ENCODE measurements at regions of chr4 and their contacts with region 1.

Region 1: GRCh38 chr4:109433205-109434006 is at the start of gene SEC24B:
- DNase-seq: peak; percentile 89
- H3K4me3 ChIP-seq: peak within 1 kb of the TSS; percentile 80
- H3K27ac ChIP-seq: peak within 1 kb of the TSS; percentile 92
- H3K4me1 ChIP-seq: no peaks in the 10 kb centered on the region
- H3K27me3 ChIP-seq: no peaks in the 10 kb centered on the region
- CTCF ChIP-seq: peak; percentile 88
- total RNA-seq, gene SEC24B: 26.5 to 39.5 TPM

Region 2: DNA sequence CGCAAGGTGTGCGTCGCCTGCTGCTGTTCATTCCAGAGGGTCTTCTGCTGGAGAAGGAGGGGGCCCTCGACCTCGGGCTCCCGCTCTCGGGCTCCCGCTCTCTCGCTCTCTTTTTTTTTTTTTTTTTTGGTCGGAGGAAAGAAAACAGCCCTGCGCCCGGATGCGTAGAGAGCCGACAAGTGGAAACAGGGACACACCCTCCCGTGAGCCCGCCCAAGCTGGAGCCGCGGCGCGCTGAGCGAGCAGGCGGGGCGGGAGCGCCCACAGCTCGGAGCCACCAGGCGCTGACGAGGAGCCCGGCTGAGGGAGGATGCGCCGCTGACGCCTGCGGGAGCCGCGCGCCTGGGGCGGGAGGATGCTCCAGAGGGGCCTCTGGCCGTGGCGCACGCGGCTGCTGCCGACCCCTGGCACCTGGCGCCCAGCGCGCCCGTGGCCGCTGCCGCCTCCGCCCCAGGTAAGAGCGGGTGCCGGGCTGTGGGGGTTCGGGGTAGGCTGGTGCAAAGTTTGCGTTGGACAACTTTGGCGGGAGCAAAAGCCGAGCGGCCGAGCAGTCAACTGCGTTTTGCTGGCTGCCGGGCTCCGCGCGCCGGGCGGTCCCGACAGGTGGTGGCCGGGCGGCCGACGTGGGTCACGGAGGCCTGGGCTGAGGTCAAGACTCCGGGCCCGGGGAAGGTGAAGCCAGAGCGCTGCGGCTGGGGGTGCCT is 126.7 kb after region 1 on chr4 and contains the start of gene MCUB:
- intact Hi-C with region 1: loop called (anchors 10 kb)
- DNase-seq: peak; percentile 90
- H3K4me3 ChIP-seq: peak within 1 kb of the TSS; percentile 84
- H3K27ac ChIP-seq: peak within 1 kb of the TSS; percentile 91
- H3K4me1 ChIP-seq: no peaks in the 10 kb centered on the region
- H3K27me3 ChIP-seq: no peaks in the 10 kb centered on the region
- CTCF ChIP-seq: no peak
- total RNA-seq, gene MCUB: 10.4 to 11.7 TPM

Region 3: GRCh38 chr4:109702950-109703663 is 269.7 kb after region 1 on chr4 and contains the start of gene CASP6:
- intact Hi-C with region 1: loop called (anchors 5 kb)
- DNase-seq: peak; percentile 95
- H3K4me3 ChIP-seq: peak within 1 kb of the TSS; percentile 81
- H3K27ac ChIP-seq: peak within 1 kb of the TSS; percentile 96
- H3K4me1 ChIP-seq: no peaks in the 10 kb centered on the region
- H3K27me3 ChIP-seq: no peaks in the 10 kb centered on the region
- CTCF ChIP-seq: peak; percentile 61
- total RNA-seq, gene CASP6: 110 to 115 TPM

Region 4: GRCh38 chr4:109809655-109810054 is 376.2 kb after region 1 on chr4:
- intact Hi-C with region 1: loop called (anchors 5 kb)
- DNase-seq: no peak
- H3K4me3 ChIP-seq: no peak overlapping the region
- H3K27ac ChIP-seq: no peak overlapping the region
- H3K4me1 ChIP-seq: no peaks in the 10 kb centered on the region
- H3K27me3 ChIP-seq: no peaks in the 10 kb centered on the region
- CTCF ChIP-seq: no peak

Region 5: DNA sequence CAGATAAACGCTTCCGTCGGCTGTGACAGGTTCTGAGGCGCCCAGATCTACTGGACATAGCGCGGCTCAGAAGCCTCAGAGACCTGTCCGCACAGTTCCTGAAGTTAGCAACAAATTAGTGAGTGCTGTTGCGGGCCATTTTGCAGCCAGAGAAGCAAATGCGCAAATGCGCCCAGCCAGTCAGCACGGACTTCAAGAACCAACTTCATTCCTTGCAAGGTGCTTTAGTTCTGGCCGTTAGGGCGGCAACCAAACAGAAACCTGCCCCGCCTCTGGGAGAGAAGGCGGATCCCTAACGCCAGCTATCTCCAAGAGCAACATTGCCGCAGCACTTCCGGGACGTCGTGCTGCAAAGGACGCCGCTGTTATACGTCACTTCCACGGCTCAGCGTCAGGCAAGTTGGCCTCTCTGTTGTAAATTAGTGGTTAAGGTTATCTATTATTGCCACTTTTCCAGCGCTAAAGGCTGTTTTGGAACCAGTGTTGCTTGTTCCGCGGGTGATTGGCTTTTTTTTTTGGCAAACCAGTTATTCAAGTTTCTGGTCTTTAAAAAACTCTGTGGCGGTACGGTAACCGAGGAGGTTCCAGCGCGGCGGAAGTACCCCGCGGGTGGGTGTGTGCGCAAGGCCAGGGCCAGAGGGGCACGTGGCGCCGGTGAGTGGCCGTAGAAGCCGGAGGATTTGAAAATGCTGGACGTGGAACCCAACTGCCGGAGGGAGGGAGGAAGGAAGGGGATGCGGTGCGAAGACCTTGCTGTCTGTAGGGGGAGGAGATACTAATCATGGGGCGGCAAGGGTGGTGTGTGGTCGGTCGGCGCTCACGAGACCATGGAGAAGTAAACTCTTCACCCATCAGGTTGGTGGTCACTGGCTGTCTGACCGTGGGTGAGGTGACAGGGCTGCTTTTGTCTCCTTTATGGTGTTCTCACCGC is 382.0 kb after region 1 on chr4 and contains the start of gene GAR1:
- intact Hi-C with region 1: loop called (anchors 5 kb)
- DNase-seq: peak; percentile 96
- H3K4me3 ChIP-seq: peak within 1 kb of the TSS; percentile 65
- H3K27ac ChIP-seq: peak within 1 kb of the TSS; percentile 78
- H3K4me1 ChIP-seq: peaks cover 8% of the 10 kb centered on the region
- H3K27me3 ChIP-seq: no peaks in the 10 kb centered on the region
- CTCF ChIP-seq: no peak
- total RNA-seq, gene GAR1: 16.8 to 21.0 TPM